MCF 10A (cell line): ENCODE measurements at regions of chr13 and their contacts with region 1.

Region 1: DNA sequence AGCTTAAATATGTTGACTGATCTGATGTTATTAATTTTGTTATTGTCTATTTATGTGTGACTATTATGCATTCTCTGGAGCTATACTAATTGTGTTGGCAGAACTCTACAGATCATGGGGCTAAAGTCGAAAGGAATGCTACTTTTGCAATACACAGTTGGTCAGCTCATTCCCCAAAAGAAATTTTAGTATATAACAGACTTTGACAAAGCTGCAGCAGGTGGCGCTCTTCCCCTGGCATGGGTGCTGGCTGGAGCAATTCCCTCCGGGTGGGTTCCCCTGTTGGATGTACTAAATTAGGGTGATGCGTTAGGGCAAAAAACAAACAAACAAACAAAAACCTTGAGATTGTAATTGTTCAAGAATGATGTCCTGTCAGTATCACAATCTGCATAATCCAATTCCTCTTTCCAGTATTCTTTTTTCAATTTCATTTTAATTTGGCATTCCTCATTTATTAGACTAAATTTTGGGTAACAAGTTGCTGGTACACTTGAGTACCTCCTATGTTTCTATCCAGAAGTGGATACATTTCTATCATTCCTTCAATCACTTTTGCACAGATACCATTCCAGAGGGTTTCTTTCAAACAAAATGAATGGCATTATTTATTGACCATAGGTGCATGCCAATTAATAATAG is 322.8 kb upstream of the EDNRB start:
- DNase-seq: peak; percentile 53
- H3K4me3 Mint-ChIP-seq: no peak overlapping the region
- H3K27ac Mint-ChIP-seq: no peak overlapping the region
- H3K4me1 Mint-ChIP-seq: no peaks in the 10 kb centered on the region
- H3K27me3 Mint-ChIP-seq: no peaks in the 10 kb centered on the region
- CTCF ChIP-seq: peak; percentile 60

Region 2: DNA sequence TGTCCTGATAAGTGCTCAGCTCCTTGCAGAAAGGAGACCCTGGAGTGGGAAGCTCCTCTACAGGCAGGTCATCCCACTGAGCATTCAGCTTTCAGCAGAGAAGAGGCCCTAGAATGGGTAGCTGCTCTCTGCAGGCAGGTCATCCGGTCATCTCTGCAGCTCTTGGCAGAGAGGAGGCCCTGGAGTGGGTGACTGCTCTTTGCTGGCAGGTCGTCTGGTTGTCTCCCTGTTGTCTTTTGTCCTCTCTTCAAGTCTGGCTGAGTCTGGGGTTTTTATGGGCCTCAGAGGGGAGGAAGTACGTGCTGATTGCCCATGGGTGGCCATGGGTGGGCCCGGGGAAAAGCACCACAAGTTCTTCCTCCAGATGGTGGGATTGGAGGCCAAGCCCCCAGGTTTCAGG is 72.4 kb before region 1 on chr13:
- CTCF ChIA-PET with region 1: no interaction called
- POLR2A ChIA-PET with region 1: no interaction called
- intact Hi-C with region 1: no loop called
- DNase-seq: no peak
- H3K4me3 Mint-ChIP-seq: no peak overlapping the region
- H3K27ac Mint-ChIP-seq: no peak overlapping the region
- H3K4me1 Mint-ChIP-seq: no peaks in the 10 kb centered on the region
- H3K27me3 Mint-ChIP-seq: peaks cover 12% of the 10 kb centered on the region
- CTCF ChIP-seq: no peak

Region 3: DNA sequence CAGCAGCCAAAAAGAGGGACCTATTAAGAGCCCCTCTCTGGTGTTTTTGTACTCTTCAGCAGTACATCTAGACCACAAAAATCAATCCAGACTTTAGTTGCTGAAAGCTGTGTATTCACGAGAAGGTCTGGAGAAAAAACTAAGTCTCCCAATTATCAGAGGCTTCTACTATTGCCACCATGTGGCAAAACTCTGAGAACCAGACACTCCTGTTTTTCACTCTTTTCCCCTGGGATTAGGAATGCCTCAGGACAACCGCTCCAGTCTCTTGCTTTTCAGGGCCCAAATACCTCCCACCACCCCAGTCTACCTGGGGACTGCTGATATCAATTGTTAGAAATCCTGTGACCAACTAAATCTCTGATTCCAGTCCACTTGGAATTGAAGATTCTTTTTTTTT is 447.6 kb after region 1 on chr13:
- CTCF ChIA-PET with region 1: no interaction called
- POLR2A ChIA-PET with region 1: no interaction called
- intact Hi-C with region 1: loop called (anchors 5 kb)
- DNase-seq: no peak
- H3K4me3 Mint-ChIP-seq: no peak overlapping the region
- H3K27ac Mint-ChIP-seq: no peak overlapping the region
- H3K4me1 Mint-ChIP-seq: no peaks in the 10 kb centered on the region
- H3K27me3 Mint-ChIP-seq: peaks cover 65% of the 10 kb centered on the region
- CTCF ChIP-seq: no peak

Region 4: GRCh38 chr13:78806457-78806856 is 565.1 kb after region 1 on chr13:
- CTCF ChIA-PET with region 1: no interaction called
- POLR2A ChIA-PET with region 1: no interaction called
- intact Hi-C with region 1: no loop called
- DNase-seq: peak; percentile 9
- H3K4me3 Mint-ChIP-seq: no peak overlapping the region
- H3K27ac Mint-ChIP-seq: no peak overlapping the region
- H3K4me1 Mint-ChIP-seq: no peaks in the 10 kb centered on the region
- H3K27me3 Mint-ChIP-seq: peaks cover 72% of the 10 kb centered on the region
- CTCF ChIP-seq: no peak